Mammary epithelial cell (primary cell): ENCODE measurements at regions of chr6 and their contacts with region 1.

Region 1: DNA sequence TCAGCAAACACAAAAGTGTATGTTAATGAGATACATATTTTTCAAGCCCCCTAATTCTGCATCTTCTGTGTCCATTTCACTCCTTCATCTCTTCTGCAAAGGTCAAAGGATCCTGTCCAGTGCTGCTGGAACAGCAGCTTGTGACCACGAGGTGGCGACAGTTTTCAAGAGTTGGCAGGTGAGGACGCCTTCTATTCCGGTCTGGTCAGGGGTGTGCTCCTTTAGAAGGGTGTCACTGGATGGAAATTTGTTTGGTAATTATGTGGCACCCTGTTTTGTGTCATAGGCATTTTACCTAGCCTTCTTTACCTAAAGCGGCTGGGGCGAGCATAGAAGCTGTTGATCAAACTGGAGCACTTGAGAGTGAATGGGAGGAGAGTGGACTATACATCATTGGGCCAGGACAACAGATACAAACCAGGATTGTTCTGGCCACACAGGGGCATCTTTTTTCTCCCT is 32.9 kb upstream of the ERVFRD-1 start:
- DNase-seq: peak; percentile 70
- H3K4me3 ChIP-seq: no peak overlapping the region
- H3K27ac ChIP-seq: peak overlapping the region; percentile 79
- H3K4me1 ChIP-seq: peaks cover 46% of the 10 kb centered on the region
- H3K27me3 ChIP-seq: no peaks in the 10 kb centered on the region
- CTCF ChIP-seq: peak; percentile 94 to 96

Region 2: DNA sequence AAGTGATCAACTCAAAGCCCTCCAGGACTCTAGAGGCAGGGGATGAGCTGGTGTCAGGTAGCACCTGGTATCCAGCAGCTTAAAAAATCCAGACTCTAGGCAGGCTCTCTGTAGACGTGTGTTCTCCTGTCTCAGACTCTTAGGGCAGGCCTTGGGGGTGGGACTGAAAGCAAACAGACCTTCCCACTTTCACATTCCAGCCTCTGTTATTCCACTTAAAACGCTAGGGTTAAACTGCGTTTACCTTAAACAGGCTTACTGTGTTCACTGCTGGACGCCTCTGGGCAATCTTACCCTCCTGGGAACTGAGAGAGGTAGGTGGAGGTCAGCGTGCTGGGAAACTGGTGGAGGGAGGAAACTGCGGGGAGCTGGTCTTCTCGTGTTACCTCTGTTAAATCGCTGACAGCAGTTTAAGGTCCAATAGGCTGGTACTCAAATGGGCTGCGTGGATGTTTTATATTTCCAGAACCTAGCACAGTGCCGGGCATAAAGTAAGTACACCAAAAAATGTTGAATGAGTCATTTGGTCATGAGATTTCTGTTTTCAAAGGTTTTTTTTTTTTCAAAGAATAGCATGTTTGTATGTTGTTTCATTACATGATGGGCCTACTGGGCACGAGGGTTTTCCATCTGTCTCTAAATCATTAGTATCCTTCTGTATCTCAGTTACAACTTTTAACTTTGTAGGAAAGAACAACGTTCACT is 623.2 kb before region 1 on chr6 and contains the start of gene GCNT2:
- CTCF ChIA-PET with region 1: no interaction called
- dilution Hi-C with region 1: no loop called
- in situ Hi-C with region 1: no loop called
- intact Hi-C with region 1: no loop called
- DNase-seq: no peak
- H3K4me3 ChIP-seq: no peak within 1 kb of the TSS
- H3K27ac ChIP-seq: no peak within 1 kb of the TSS
- H3K4me1 ChIP-seq: no peaks in the 10 kb centered on the region
- H3K27me3 ChIP-seq: no peaks in the 10 kb centered on the region
- CTCF ChIP-seq: no peak
- total RNA-seq, gene GCNT2: 0.33 TPM in 1 of 2 donors, not detected in the other

Region 3: DNA sequence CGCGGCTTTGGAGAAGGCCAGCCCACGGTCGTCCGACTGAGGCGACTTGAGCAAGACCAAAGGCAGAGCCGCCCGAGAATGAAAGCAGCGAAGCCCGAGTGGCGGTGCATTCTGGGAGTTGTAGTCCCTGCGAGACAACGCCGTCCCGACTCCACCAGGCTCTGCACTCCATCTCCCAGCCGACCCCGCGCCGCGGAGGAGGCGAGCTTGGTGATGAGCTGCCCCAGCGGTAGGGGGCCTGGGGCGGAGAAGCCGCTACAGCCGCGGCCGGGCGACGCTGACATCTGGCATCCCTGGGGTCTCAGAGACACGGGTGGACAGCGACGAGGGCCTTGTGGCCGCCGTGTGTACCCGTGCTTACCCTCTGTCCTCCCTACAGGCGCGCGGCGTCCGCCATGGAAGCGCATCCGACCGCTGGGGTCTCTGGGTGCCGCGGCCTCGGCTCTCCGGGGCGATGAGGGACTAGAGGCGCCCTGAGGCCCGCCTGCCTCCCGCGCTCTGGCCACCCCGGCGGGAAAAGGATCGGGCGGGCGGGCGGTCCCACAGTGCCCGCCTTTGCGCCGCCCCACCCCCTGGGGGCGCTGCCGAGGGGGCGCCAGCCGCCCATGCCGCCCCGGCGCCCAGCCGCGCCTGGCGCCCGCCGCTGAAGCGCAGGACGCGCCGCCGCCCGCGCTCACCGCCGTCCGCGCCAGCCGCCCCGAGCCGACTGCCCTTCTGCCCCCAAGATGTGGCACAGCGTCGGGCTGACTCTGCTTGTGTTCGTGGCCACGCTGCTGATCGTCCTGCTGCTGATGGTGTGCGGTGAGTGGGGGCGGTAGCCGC is 50.6 kb before region 1 on chr6 and contains the start of gene SMIM13:
- CTCF ChIA-PET with region 1: no interaction called
- dilution Hi-C with region 1: loop called (anchors 5 kb)
- in situ Hi-C with region 1: no loop called
- intact Hi-C with region 1: loop called (anchors 1 kb)
- DNase-seq: peak; percentile 95
- H3K4me3 ChIP-seq: peak within 1 kb of the TSS; percentile 81 to 100 (median 89)
- H3K27ac ChIP-seq: peak within 1 kb of the TSS; percentile 87
- H3K4me1 ChIP-seq: peaks cover 12% of the 10 kb centered on the region
- H3K27me3 ChIP-seq: no peaks in the 10 kb centered on the region
- CTCF ChIP-seq: peak; percentile 16 to 42
- total RNA-seq, gene SMIM13: 12.3 to 17.5 TPM